MCF 10A (cell line): ENCODE measurements at regions of chr3 and their contacts with region 1.

Region 1: GRCh38 chr3:188154014-188154808 is at the start of gene LPP:
- DNase-seq: peak; percentile 67
- H3K4me3 Mint-ChIP-seq: peak within 1 kb of the TSS; percentile 90
- H3K27ac Mint-ChIP-seq: peak within 1 kb of the TSS; percentile 96
- H3K4me1 Mint-ChIP-seq: peaks cover 42% of the 10 kb centered on the region
- H3K27me3 Mint-ChIP-seq: no peaks in the 10 kb centered on the region
- CTCF ChIP-seq: no peak
- total RNA-seq, gene LPP: 107 and 117 TPM in 2 replicates

Region 2: DNA sequence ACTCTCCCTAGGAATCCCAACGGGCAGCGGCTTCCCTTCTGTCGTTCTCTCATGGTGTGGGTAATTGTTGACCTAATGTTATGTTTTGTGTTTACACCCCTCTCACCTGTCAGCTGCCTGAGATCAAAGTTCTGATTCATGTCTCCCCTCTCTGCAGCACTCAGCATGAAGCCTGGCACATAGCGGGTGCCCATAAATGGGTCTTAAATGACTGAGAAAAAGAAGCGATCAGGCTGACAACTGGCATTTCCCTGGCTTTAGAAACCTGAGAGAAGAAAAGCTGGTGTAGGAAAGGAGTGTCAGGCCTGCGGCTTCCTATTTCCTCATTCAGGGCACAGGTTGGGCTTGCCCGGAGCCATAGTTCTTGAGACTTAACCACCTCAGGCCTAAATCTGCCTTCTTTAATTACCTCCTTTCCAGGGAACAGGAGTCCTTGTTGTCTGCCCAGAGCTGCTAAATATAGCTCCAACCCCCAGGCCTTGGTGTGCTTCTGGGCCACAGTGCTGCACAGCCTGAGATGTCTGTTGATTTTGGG is 31.6 kb after region 1 on chr3:
- CTCF ChIA-PET with region 1: no interaction called
- POLR2A ChIA-PET with region 1: interaction called, 9 read pairs
- intact Hi-C with region 1: loop called (anchors 5 kb)
- DNase-seq: peak; percentile 38
- H3K4me3 Mint-ChIP-seq: no peak overlapping the region
- H3K27ac Mint-ChIP-seq: no peak overlapping the region
- H3K4me1 Mint-ChIP-seq: peaks cover 38% of the 10 kb centered on the region
- H3K27me3 Mint-ChIP-seq: no peaks in the 10 kb centered on the region
- CTCF ChIP-seq: no peak

Region 3: DNA sequence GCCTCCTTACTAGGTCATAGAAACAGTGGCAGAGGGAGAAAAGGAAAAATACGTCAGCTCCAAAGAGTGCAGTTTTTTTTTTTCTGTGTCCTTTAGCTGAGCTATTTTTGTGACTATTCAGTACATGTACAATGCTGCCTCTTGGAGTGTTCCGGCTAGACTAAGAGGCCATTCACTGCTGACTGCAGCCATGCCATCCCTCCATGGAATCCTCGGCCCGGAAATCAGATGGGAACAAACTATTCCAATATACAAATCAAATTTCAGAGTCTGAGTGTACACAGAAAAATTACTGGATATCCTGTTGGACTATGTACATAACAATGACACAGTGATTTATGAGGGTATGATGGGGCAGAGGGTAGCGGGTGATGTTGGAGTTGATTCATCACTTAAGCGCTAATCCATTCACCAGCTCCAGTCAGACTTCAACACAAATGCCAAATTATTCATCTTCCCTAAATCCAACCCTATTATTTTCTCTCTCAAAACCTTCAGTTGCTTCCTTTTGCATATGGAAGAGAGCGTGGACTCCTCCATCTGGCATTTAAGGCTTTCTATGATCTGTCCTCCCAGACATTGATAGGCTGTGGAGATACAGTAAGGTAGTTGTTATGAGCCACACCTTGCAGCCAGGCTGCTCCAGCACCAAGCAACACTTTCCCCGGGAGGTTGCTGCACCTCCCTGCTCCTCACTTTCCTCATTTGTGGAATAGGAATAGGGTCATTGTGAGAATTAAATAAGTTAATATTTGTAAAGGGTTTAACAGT is 108.9 kb after region 1 on chr3:
- CTCF ChIA-PET with region 1: no interaction called
- POLR2A ChIA-PET with region 1: interaction called, 16 read pairs
- intact Hi-C with region 1: loop called (anchors 10 kb)
- DNase-seq: peak; percentile 62
- H3K4me3 Mint-ChIP-seq: no peak overlapping the region
- H3K27ac Mint-ChIP-seq: peak overlapping the region; percentile 43
- H3K4me1 Mint-ChIP-seq: peaks cover 8% of the 10 kb centered on the region
- H3K27me3 Mint-ChIP-seq: no peaks in the 10 kb centered on the region
- CTCF ChIP-seq: no peak

Region 4: DNA sequence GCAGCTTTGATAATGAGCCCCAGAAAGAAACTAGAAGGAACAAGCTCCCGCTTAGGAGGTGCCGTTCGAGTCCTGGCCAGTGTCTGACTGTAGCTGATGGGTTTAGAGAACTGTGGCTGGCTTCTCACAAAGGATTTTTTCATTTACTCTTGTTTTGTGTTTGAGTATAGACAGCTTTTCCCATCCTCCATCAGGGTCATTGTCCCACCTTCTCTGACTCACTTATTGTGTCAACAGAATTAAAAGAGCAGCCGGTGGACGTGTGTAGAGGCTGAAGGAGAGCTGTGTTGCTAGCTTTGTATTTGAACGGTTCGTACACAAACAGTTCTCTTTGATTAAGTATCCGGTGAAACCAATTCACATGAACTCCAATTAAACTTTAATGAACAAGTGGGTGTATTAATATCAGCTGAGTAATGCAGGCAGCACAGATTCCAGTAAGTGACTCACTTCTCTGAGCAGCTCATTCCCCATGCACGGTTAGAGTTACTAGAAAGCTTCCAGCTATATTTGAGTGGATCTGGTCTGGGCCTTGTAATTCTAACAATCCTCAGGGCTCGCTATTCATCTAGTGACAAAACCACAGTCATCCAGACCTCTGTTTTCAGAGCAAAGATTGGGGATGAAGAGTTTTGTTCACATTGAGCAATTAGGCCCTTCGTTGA is 140.7 kb after region 1 on chr3:
- CTCF ChIA-PET with region 1: no interaction called
- POLR2A ChIA-PET with region 1: interaction called, 7 read pairs
- intact Hi-C with region 1: loop called (anchors 10 kb)
- DNase-seq: peak; percentile 83
- H3K4me3 Mint-ChIP-seq: peak overlapping the region; percentile 29
- H3K27ac Mint-ChIP-seq: peak overlapping the region; percentile 57
- H3K4me1 Mint-ChIP-seq: peaks cover 48% of the 10 kb centered on the region
- H3K27me3 Mint-ChIP-seq: no peaks in the 10 kb centered on the region
- CTCF ChIP-seq: no peak